HepG2 (cell line): ENCODE measurements at regions of chr3 and their contacts with region 1.

Region 1: GRCh38 chr3:177135844-177136492 is 61.3 kb downstream of the TBL1XR1 start:
- DNase-seq: peak; percentile 91
- ATAC-seq: peak; percentile 91
- H3K4me3 ChIP-seq: no peak overlapping the region
- H3K27ac ChIP-seq: peak overlapping the region; percentile 50
- H3K4me1 ChIP-seq: peaks cover 51% of the 10 kb centered on the region
- H3K27me3 ChIP-seq: no peaks in the 10 kb centered on the region
- CTCF ChIP-seq: no peak
- EP300 ChIP-seq: peak in 1 of 2 experiments; percentile 53; a peak in 1 of 4 replicates
- POLR2A ChIP-seq: no peak
- RAD21 ChIP-seq: no peak

Region 2: GRCh38 chr3:176714034-176714433 is 421.9 kb before region 1 on chr3:
- CTCF ChIA-PET with region 1: no interaction called
- POLR2A ChIA-PET with region 1: no interaction called
- in situ Hi-C with region 1: no loop called
- intact Hi-C with region 1: no loop called
- DNase-seq: no peak
- ATAC-seq: peak; percentile 62
- H3K4me3 ChIP-seq: no peak overlapping the region
- H3K27ac ChIP-seq: no peak overlapping the region
- H3K4me1 ChIP-seq: no peaks in the 10 kb centered on the region
- H3K27me3 ChIP-seq: no peaks in the 10 kb centered on the region
- CTCF ChIP-seq: no peak
- EP300 ChIP-seq: no peak
- POLR2A ChIP-seq: no peak
- RAD21 ChIP-seq: no peak

Region 3: DNA sequence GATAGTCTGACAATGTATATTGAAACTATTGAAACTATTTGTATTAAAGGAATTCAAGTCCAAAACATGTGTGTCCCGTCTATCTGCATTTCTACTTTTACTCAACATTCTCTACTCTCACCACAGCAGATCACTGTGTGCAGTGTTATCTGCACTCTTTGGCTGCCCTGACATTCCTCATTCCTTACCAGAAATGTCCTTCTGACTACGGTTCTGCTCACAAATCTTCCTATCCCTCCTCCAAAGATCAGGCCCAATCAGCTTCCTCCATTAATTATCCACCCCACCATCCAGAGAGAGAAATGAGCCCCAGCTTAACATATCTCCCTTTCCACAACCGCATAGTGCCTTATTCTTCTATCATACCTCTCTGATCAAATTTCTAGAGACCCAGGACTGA is 33.4 kb before region 1 on chr3:
- CTCF ChIA-PET with region 1: no interaction called
- POLR2A ChIA-PET with region 1: no interaction called
- in situ Hi-C with region 1: no loop called
- intact Hi-C with region 1: no loop called
- DNase-seq: no peak
- ATAC-seq: no peak
- H3K4me3 ChIP-seq: no peak overlapping the region
- H3K27ac ChIP-seq: no peak overlapping the region
- H3K4me1 ChIP-seq: peaks cover 24% of the 10 kb centered on the region
- H3K27me3 ChIP-seq: no peaks in the 10 kb centered on the region
- CTCF ChIP-seq: no peak
- EP300 ChIP-seq: no peak
- POLR2A ChIP-seq: no peak
- RAD21 ChIP-seq: no peak

Region 4: DNA sequence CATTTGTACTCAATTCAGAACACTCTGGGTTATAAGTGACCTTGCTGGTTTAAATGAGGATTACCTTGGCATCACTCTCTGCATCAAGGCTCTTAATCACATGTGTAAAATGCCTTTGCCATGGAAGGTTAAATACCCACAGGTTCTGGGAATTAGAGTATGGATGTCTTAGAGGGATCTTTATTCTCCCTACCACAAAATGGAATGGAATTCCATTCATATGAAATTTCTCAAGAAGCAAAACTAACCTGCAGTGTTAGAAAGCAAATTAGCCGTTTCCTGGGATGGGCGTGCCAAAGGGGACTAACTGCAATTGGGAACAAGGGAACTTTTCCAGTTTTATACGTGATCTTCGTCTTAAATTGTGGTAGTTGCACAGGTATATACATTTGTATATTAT is 21.5 kb after region 1 on chr3:
- CTCF ChIA-PET with region 1: no interaction called
- POLR2A ChIA-PET with region 1: no interaction called
- in situ Hi-C with region 1: no loop called
- intact Hi-C with region 1: no loop called
- DNase-seq: no peak
- ATAC-seq: no peak
- H3K4me3 ChIP-seq: no peak overlapping the region
- H3K27ac ChIP-seq: no peak overlapping the region
- H3K4me1 ChIP-seq: peaks cover 10% of the 10 kb centered on the region
- H3K27me3 ChIP-seq: no peaks in the 10 kb centered on the region
- CTCF ChIP-seq: no peak
- EP300 ChIP-seq: no peak
- POLR2A ChIP-seq: no peak
- RAD21 ChIP-seq: no peak

Region 5: DNA sequence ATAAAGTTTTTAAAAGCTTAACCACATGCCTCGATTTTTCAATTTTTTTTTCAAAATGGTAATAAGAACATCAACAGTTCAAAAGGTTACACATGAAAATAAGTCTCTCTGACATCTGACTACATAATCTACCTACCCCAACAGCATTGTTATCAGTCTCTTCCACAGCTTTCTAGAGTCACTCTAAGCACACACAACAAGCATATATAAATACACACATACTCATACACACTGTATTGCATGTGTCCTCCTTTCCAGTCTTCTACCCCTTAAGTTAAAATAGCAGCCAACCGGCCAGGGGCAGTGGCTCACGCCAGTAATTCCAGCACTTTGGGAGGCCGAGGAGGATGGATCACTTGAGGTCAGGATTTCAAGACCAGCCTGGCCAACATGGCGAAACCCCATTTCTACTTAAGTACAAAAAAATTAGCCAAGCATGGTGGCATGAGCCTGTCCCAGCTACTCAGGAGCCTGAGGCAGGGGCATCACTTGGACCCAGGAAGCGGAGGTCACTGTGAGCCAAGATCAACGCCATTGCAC is 49.1 kb after region 1 on chr3:
- CTCF ChIA-PET with region 1: no interaction called
- POLR2A ChIA-PET with region 1: no interaction called
- in situ Hi-C with region 1: no loop called
- intact Hi-C with region 1: loop called (anchors 1 kb)
- DNase-seq: no peak
- ATAC-seq: no peak
- H3K4me3 ChIP-seq: no peak overlapping the region
- H3K27ac ChIP-seq: no peak overlapping the region
- H3K4me1 ChIP-seq: peaks cover 36% of the 10 kb centered on the region
- H3K27me3 ChIP-seq: no peaks in the 10 kb centered on the region
- CTCF ChIP-seq: no peak
- EP300 ChIP-seq: no peak
- POLR2A ChIP-seq: no peak
- RAD21 ChIP-seq: no peak